PC-9 (cell line): ENCODE measurements at regions of chr18 and their contacts with region 1.

Region 1: GRCh38 chr18:3652380-3653262 is 202.6 kb downstream of the TGIF1 start:
- DNase-seq: peak; percentile 97 to 99
- H3K4me3 ChIP-seq: peak overlapping the region; percentile 63
- H3K27ac ChIP-seq: peak overlapping the region; percentile 99
- H3K4me1 ChIP-seq: peaks cover 80% of the 10 kb centered on the region
- H3K27me3 ChIP-seq: no peaks in the 10 kb centered on the region
- CTCF ChIP-seq: 0 out of 2 replicates have a peak, but pooled peaks have one; percentile 19

Region 2: DNA sequence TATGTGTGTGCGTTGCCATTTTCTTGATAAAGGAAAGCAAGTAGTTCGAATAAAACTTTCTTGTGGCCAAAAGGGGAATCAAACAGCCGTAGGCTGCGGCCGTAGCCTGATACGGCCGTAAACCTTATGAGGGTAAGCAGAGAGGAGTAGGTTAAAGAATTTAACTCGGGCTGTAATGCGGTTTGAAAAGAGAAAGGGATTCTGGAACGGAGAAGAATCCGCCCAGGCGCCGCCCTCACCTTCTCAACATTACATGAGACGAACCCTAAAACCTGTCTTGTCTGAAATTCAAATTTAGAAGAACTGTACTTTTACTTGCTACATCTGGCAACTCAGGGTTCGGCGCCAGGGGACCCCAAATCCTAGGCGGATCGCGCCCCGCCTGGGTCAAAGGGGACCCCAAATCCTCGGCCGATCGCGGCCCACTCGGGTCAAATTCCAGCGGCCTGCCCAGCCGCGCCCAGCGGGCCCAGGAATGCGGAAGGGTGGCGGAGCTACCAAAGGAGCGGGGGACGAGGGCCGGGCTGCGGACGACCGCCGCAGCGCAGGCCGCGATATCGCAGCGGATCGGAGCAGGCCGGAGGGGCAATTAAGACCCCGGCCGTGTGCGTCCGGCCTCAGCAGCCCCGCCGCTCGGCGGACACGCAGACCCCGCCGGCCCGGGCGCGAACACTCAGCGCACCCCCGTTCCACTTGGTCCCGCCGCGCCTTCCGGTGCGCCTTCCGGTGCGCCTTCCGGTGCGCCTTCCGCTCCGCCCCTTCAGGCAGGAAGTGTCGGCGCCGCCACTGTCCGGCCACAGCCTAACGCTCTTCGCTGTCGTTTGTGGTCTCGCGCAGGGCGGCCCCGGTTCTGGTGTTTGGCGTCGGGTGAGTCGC is 391.0 kb before region 1 on chr18 and contains the start of gene MYL12B:
- CTCF ChIA-PET with region 1: no interaction called
- POLR2A ChIA-PET with region 1: interaction called, 6 read pairs
- intact Hi-C with region 1: loop called (anchors 5 kb)
- DNase-seq: peak; percentile 77 to 89
- H3K4me3 ChIP-seq: peak within 1 kb of the TSS; percentile 100
- H3K27ac ChIP-seq: peak within 1 kb of the TSS; percentile 93
- H3K4me1 ChIP-seq: peaks cover 39% of the 10 kb centered on the region
- H3K27me3 ChIP-seq: no peaks in the 10 kb centered on the region
- CTCF ChIP-seq: no peak
- total RNA-seq, gene MYL12B: 381 and 383 TPM in 2 replicates

Region 3: GRCh38 chr18:3454365-3455089 is 198.1 kb before region 1 on chr18:
- CTCF ChIA-PET with region 1: interaction called, 5 read pairs
- POLR2A ChIA-PET with region 1: interaction called, 17 read pairs
- intact Hi-C with region 1: no loop called
- DNase-seq: peak; percentile 41 to 52
- H3K4me3 ChIP-seq: peak overlapping the region; percentile 83
- H3K27ac ChIP-seq: peak overlapping the region; percentile 96
- H3K4me1 ChIP-seq: peaks cover 49% of the 10 kb centered on the region
- H3K27me3 ChIP-seq: no peaks in the 10 kb centered on the region; the same call in 1 of the 2 replicates
- CTCF ChIP-seq: peak; percentile 79

Region 4: DNA sequence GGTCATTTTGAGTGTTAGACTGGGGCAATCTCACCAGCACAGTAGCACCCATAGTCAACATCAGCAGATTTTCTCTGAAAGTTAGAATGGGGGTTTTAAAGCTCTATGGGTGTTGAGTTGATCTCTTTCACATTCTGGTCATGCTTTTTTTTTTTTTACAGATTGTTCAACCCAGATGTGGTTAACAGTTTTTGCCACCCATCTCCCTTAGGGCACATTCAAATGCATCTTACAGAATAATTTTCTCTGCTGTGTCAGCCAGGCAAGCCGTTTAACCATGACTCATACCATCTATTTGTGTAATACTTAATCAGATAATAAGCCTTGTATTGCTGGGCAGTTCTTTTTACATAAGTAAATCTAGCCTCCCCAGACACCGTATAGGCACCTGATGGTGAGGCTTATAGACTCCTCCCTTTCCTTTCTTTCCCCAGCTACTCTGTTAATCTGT is 140.7 kb before region 1 on chr18:
- CTCF ChIA-PET with region 1: no interaction called
- POLR2A ChIA-PET with region 1: no interaction called
- intact Hi-C with region 1: no loop called
- DNase-seq: peak; percentile 51 to 81
- H3K4me3 ChIP-seq: no peak overlapping the region
- H3K27ac ChIP-seq: 0 out of 2 replicates have a peak overlapping the region, but pooled peaks have one; percentile 6
- H3K4me1 ChIP-seq: peaks cover 16% of the 10 kb centered on the region
- H3K27me3 ChIP-seq: no peaks in the 10 kb centered on the region
- CTCF ChIP-seq: no peak

Region 5: DNA sequence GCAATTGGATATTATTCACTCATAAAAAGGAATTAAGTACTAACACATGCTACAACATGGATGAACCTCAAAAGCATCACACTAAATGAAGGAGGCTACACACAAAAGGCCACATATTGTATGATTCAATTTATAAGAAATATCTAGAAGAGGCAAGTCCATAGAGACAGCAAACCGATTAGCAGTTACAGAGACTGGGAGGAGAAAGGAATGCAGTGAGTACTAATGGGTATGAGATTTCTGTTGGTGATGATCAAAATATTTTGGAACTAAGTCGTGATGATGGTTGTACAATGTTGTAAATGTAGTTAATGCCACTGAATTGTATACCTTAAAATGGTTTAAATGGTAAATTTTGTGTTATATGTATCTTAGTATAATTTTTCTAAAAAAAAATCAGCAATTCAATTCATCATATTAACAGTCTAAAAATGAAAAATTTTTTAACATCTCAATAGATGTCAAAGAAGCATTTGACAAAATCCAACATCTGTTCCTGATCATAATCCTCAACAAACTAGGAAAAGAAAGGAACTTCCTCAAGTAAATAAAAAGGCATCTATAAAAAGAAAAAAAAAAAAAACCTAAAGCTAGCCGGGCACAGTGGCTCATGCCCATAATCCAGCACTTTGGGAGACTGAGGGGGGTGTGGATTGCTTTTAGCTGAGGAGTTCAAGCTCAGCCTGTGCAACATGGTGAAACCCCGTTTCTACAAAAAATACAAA is 104.6 kb before region 1 on chr18:
- CTCF ChIA-PET with region 1: no interaction called
- POLR2A ChIA-PET with region 1: no interaction called
- intact Hi-C with region 1: no loop called
- DNase-seq: no peak
- H3K4me3 ChIP-seq: no peak overlapping the region
- H3K27ac ChIP-seq: no peak overlapping the region
- H3K4me1 ChIP-seq: no peaks in the 10 kb centered on the region
- H3K27me3 ChIP-seq: no peaks in the 10 kb centered on the region
- CTCF ChIP-seq: no peak

Region 6: GRCh38 chr18:3604498-3605408 is 47.9 kb before region 1 on chr18:
- CTCF ChIA-PET with region 1: interaction called, 4 read pairs
- POLR2A ChIA-PET with region 1: interaction called, 26 read pairs
- intact Hi-C with region 1: loop called (anchors 1 kb)
- DNase-seq: peak in 1 of 2 experiments; percentile 97
- H3K4me3 ChIP-seq: peak overlapping the region; percentile 72
- H3K27ac ChIP-seq: peak overlapping the region; percentile 100
- H3K4me1 ChIP-seq: peaks cover 32% of the 10 kb centered on the region
- H3K27me3 ChIP-seq: no peaks in the 10 kb centered on the region
- CTCF ChIP-seq: no peak

Region 7: GRCh38 chr18:3631887-3632286 is 20.7 kb before region 1 on chr18:
- CTCF ChIA-PET with region 1: no interaction called
- POLR2A ChIA-PET with region 1: interaction called, 13 read pairs
- intact Hi-C with region 1: no loop called
- DNase-seq: no peak
- H3K4me3 ChIP-seq: no peak overlapping the region
- H3K27ac ChIP-seq: no peak overlapping the region
- H3K4me1 ChIP-seq: peaks cover 7% of the 10 kb centered on the region
- H3K27me3 ChIP-seq: no peaks in the 10 kb centered on the region
- CTCF ChIP-seq: no peak

Region 8: GRCh38 chr18:3869848-3870247 is 217.2 kb after region 1 on chr18:
- CTCF ChIA-PET with region 1: no interaction called
- POLR2A ChIA-PET with region 1: no interaction called
- intact Hi-C with region 1: no loop called
- DNase-seq: no peak
- H3K4me3 ChIP-seq: no peak overlapping the region
- H3K27ac ChIP-seq: no peak overlapping the region
- H3K4me1 ChIP-seq: no peaks in the 10 kb centered on the region
- H3K27me3 ChIP-seq: no peaks in the 10 kb centered on the region
- CTCF ChIP-seq: peak; percentile 78